CD8-positive, alpha-beta memory T cell (primary cell): ENCODE measurements at regions of chr9 and their contacts with region 1.

Region 1: GRCh38 chr9:89923961-89924504 is 319.2 kb downstream of the GADD45G start:
- DNase-seq: no peak
- H3K4me3 ChIP-seq: no peak overlapping the region
- H3K4me3 Mint-ChIP-seq: no peak overlapping the region
- H3K27ac ChIP-seq: no peak overlapping the region
- H3K27ac Mint-ChIP-seq: no peak overlapping the region
- H3K4me1 ChIP-seq: no peaks in the 10 kb centered on the region
- H3K4me1 Mint-ChIP-seq: peaks cover 5 to 6% (median 6%) of the 10 kb centered on the region in 3 donors
- H3K27me3 ChIP-seq: no peaks in the 10 kb centered on the region
- H3K27me3 Mint-ChIP-seq: peaks cover 18 to 35% of the 10 kb centered on the region in 2 donors

Region 2: DNA sequence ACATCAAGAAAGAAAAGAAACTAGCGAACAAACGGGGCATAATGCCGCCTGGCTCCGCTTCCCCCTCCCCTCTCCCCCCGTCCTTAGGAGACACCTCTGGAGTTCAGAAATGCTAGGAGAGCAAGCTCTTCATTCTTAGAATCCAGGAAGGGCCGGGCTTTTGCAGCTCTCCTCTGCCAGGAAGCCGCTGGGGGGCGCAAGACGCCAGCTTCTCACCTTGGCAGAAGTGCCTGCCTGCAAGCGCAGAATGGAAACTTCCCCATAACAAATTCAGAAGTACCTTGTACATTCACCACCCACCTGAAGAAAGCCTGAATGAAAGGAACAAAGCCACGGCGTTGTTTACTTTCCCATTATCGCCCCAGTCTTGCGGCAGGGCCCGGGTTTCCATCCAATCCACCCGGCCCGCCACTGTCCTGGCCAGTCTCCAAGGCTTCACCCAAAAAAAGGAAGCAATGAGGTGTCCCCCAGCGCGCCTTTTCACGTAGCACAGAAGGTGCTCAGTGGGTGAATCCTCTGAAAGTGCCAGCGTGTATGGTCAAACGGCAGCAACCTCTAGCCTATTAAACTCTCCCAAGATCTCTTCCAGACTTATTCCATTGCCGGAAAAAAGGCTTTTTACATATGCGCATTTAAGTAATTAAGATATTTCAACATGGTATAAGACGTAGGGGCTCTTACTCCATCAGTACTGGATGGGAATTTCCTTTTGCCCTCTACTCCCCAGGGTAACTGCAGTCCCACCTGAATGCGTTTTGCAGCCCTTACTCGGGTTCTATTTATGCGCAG is 320.9 kb before region 1 on chr9:
- CTCF ChIA-PET with region 1: interaction called, 15 read pairs
- POLR2A ChIA-PET with region 1: no interaction called
- DNase-seq: peak; percentile 72 to 87 (median 74)
- H3K4me3 ChIP-seq: peak overlapping the region; percentile 69
- H3K4me3 Mint-ChIP-seq: peak overlapping the region; percentile 70 to 89 (median 77)
- H3K27ac ChIP-seq: no peak overlapping the region
- H3K27ac Mint-ChIP-seq: peak overlapping the region in 7 of 8 donors; percentile 0 to 85 (median 70)
- H3K4me1 ChIP-seq: peaks cover 27% of the 10 kb centered on the region
- H3K4me1 Mint-ChIP-seq: peaks cover 21 to 38% (median 24%) of the 10 kb centered on the region in 3 donors
- H3K27me3 ChIP-seq: peaks cover 7% of the 10 kb centered on the region
- H3K27me3 Mint-ChIP-seq: peaks cover 23 to 35% of the 10 kb centered on the region in 2 donors

Region 3: GRCh38 chr9:89878687-89879086 is 45.3 kb before region 1 on chr9:
- CTCF ChIA-PET with region 1: no interaction called
- POLR2A ChIA-PET with region 1: no interaction called
- DNase-seq: no peak
- H3K4me3 ChIP-seq: no peak overlapping the region
- H3K4me3 Mint-ChIP-seq: no peak overlapping the region
- H3K27ac ChIP-seq: no peak overlapping the region
- H3K27ac Mint-ChIP-seq: no peak overlapping the region
- H3K4me1 ChIP-seq: no peaks in the 10 kb centered on the region
- H3K4me1 Mint-ChIP-seq: no peaks in the 10 kb centered on the region
- H3K27me3 ChIP-seq: no peaks in the 10 kb centered on the region
- H3K27me3 Mint-ChIP-seq: no peaks in the 10 kb centered on the region

Region 4: DNA sequence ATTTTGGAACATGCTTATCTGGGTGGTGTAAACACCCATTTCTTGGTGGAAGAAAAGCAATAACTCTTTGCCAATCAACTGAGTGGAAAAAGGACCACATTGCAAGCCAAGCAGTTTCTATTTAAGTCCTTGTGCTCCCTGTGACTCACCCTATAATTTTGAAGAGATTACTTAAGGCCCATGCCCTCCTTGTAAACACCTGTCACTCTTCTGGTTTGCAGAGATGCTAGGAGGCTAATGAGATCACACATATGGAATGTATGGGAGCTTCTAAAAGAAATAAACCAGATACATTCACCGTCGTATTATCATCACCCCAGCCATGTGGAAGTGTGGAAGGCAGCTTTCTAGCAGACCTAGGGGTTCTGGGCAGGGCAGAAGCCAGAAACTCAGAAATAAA is 17.8 kb after region 1 on chr9:
- CTCF ChIA-PET with region 1: no interaction called
- POLR2A ChIA-PET with region 1: no interaction called
- DNase-seq: no peak
- H3K4me3 ChIP-seq: no peak overlapping the region
- H3K4me3 Mint-ChIP-seq: no peak overlapping the region
- H3K27ac ChIP-seq: no peak overlapping the region
- H3K27ac Mint-ChIP-seq: no peak overlapping the region
- H3K4me1 ChIP-seq: no peaks in the 10 kb centered on the region
- H3K4me1 Mint-ChIP-seq: no peaks in the 10 kb centered on the region
- H3K27me3 ChIP-seq: no peaks in the 10 kb centered on the region
- H3K27me3 Mint-ChIP-seq: peaks cover 18 to 49% of the 10 kb centered on the region in 2 donors